Mammary epithelial cell (primary cell): ENCODE measurements at regions of chr5 and their contacts with region 1.

Region 1: DNA sequence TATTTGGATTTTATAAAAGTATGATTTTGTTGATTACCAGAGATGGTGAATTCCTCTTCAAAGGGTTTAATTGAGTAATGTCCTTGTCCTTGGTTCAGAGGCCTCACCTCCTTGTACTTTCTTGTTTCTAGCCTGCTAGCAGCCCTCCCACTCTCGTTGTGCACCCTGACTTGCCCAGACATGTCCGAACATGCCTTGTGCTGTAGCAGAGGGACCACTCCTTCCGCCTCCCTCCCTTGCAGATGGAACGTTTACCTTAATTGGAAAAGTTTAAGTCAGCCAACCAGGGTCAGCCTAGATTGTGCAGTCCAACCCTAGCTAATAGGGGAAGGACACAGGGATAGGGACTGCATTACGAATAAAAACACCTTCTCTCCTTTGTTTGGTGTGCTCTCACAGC is 406.9 kb upstream of the NMUR2 start:
- DNase-seq: peak; percentile 35
- H3K4me3 ChIP-seq: no peak overlapping the region
- H3K27ac ChIP-seq: no peak overlapping the region
- H3K4me1 ChIP-seq: no peaks in the 10 kb centered on the region
- H3K27me3 ChIP-seq: no peaks in the 10 kb centered on the region
- CTCF ChIP-seq: no peak

Region 2: DNA sequence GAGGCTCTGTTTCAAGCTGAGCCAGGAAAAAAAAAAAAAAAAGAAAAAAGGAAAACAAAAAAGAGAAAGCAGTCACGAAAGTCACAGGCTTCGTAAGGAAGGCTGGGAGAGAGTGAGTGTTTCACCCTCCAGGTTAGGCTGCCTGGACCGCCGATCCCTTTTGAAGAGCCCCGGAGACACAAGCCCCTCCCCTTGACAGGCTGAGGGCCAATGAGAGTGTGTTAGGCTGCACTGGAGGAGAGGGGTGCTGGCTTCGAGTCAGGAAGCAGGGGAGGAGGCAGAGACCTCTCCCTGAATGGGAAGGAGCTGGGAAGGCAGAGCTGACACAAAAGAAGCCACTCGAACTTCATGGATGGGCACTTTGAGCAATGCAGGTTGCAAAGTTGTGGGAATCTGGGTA is 406.8 kb before region 1 on chr5 and contains the start of gene NMUR2:
- CTCF ChIA-PET with region 1: no interaction called
- dilution Hi-C with region 1: no loop called
- in situ Hi-C with region 1: no loop called
- intact Hi-C with region 1: no loop called
- DNase-seq: no peak
- H3K4me3 ChIP-seq: no peak within 1 kb of the TSS
- H3K27ac ChIP-seq: no peak within 1 kb of the TSS
- H3K4me1 ChIP-seq: no peaks in the 10 kb centered on the region
- H3K27me3 ChIP-seq: peaks cover 2% of the 10 kb centered on the region
- CTCF ChIP-seq: no peak
- total RNA-seq, gene NMUR2: not detected

Region 3: DNA sequence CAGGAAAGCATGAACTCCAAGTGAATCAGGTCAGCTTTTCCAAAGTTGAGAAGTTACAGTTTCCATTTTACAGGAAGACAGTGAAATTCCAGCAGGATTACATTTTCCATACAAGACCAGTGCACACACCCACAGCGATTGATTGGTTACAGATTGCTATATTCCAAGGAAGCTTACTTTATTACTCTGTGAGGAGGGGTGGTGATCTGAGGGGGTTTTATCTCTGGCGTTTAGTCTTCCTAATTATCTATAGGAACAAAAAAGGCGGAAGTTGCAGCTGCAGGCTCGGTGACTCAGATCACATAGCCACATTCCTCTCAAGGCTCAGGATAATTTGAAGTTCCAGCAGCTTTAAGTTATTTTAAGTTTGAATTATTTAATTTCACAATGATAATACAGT is 43.5 kb after region 1 on chr5:
- CTCF ChIA-PET with region 1: no interaction called
- dilution Hi-C with region 1: loop called (anchors 5 kb)
- in situ Hi-C with region 1: no loop called
- intact Hi-C with region 1: no loop called
- DNase-seq: no peak
- H3K4me3 ChIP-seq: no peak overlapping the region
- H3K27ac ChIP-seq: no peak overlapping the region
- H3K4me1 ChIP-seq: no peaks in the 10 kb centered on the region
- H3K27me3 ChIP-seq: no peaks in the 10 kb centered on the region
- CTCF ChIP-seq: no peak